ENCODE measurements at regions of chr16 and their contacts with region 1.

Region 1: DNA sequence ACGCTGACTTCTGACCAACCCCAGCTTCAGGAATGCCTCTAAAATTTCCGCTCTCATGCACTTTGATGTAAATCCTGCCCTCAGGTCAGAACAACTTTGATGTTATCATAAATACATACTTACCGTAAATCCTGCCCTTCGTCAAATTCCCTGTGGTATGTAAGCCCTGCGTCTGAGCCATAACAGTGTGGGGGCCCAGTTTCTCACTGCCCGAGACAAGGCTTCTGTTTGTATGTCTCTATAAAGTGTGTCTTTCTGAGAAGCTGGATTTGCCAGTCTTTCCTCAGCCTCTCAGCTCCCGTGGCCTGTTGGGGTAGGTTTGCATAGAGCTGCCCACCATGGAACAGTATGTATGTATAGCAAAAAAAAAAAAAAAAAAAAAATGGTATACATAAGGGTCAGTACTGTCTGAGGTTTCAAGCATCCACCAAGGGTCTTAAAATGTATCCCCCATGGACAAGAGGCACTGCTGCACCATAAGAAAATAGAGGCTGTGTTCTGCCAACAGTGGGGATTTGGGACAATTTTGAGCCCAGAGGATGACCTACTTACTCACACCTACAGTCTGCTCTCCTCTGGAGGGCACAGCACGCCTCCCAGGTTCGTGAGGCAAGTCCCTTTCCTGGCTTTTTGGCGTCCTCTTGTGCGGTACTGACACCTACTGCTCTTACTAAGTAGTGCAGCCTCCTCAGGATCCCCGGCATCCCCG is 17.5 kb downstream of the PRMT7 start:
- DNase-seq: peak; percentile 86
- ATAC-seq: peak; percentile 97
- H3K4me3 Mint-ChIP-seq: no peak overlapping the region
- H3K27ac Mint-ChIP-seq: no peak overlapping the region
- H3K4me1 Mint-ChIP-seq: peaks cover 26% of the 10 kb centered on the region
- H3K27me3 Mint-ChIP-seq: no peaks in the 10 kb centered on the region

Region 2: GRCh38 chr16:68237243-68238028 is 90.9 kb before region 1 on chr16:
- CTCF ChIA-PET with region 1: interaction called, 35 read pairs
- DNase-seq: peak; percentile 94
- ATAC-seq: peak; percentile 84
- H3K4me3 Mint-ChIP-seq: peak overlapping the region; percentile 82
- H3K27ac Mint-ChIP-seq: peak overlapping the region; percentile 90
- H3K4me1 Mint-ChIP-seq: peaks cover 34% of the 10 kb centered on the region
- H3K27me3 Mint-ChIP-seq: peaks cover 8% of the 10 kb centered on the region

Region 3: GRCh38 chr16:68275611-68276191 is 52.6 kb before region 1 on chr16:
- CTCF ChIA-PET with region 1: interaction called, 36 read pairs
- DNase-seq: peak; percentile 65
- ATAC-seq: peak; percentile 75
- H3K4me3 Mint-ChIP-seq: peak overlapping the region; percentile 37
- H3K27ac Mint-ChIP-seq: peak overlapping the region; percentile 90
- H3K4me1 Mint-ChIP-seq: peaks cover 60% of the 10 kb centered on the region
- H3K27me3 Mint-ChIP-seq: no peaks in the 10 kb centered on the region

Region 4: DNA sequence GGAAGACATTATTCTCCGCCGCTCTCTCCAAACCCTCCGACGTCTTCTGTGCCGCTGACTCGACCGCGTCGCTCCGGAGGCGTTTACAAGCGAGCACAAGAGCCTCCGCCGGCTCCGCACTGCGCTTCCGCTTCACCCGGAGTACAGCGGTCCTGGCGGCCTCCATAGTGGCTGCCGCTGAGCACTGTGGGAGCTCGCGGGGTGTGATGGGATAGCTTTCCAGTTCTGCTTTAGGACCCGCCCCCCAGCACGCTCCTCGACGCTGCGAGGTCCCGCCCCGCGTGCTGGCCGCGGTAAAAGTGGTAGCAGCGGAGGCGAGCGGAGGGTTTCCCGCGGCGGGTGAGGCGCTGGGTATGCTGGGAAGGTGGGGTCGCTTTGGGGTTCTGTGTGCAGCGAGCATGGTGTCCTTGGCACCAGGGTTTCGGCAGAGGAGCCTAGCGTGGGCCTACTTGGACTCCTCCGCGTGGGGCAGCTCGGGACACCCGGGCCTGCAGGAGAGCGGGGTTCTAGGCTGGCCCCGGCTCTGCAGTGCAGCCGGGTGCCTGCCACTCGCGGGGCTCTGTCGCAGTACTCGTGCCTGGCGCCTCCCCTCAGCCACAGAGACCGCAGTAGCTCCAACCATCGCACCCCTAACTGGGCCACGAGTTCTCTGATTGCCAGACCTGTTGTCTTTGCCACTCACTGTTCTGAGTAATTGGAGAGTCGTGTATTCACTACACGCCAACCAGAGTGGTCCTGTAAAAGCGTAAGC is 17.4 kb before region 1 on chr16 and contains the starts of genes PRMT7 and SLC7A6OS:
- CTCF ChIA-PET with region 1: interaction called, 18 read pairs
- DNase-seq: peak; percentile 96
- ATAC-seq: peak; percentile 99
- H3K4me3 Mint-ChIP-seq: peak within 1 kb of the TSS; percentile 85
- H3K27ac Mint-ChIP-seq: peak within 1 kb of the TSS; percentile 85
- H3K4me1 Mint-ChIP-seq: peaks cover 52% of the 10 kb centered on the region
- H3K27me3 Mint-ChIP-seq: no peaks in the 10 kb centered on the region
- total RNA-seq, gene PRMT7: 60.9 to 73.9 TPM
- total RNA-seq, gene SLC7A6OS: 29.8 to 30.8 TPM

Region 5: DNA sequence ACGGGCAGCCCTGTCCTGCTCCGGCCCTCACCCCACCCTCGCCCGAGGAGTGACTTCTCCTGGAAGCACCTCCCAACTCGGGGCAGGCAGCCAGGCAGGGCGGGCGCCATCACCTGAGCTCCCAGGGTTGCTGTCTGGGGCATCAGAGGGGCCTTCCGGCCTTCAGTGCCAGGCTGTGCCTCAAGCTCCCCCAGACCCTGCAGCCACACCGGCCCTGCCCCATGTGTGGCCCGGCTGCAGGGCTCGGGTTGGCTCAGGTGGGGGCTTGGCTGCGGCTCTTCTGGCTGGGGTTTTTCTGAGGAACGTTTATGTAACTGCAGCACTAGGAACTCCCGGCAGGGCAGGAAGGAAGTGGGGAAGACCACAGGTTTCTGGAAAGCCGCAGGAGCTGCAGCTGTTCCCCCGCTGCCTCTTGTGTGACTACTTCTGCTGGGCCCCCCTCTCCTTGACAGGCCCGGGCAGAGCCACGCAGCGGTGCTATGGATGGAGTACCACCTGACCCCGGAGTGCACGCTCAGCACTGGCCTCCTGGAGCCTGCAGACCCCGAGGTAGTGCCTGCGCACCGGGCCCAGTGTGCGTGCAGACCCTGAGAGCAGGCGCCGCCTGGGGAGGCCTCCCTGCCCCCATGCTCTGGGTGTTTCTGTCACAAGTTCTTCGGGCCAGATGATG is 28.1 kb after region 1 on chr16:
- CTCF ChIA-PET with region 1: interaction called, 14 read pairs
- DNase-seq: peak; percentile 95
- ATAC-seq: peak; percentile 84
- H3K4me3 Mint-ChIP-seq: peak overlapping the region; percentile 32
- H3K27ac Mint-ChIP-seq: peak overlapping the region; percentile 69
- H3K4me1 Mint-ChIP-seq: peaks cover 37% of the 10 kb centered on the region
- H3K27me3 Mint-ChIP-seq: no peaks in the 10 kb centered on the region

Region 6: DNA sequence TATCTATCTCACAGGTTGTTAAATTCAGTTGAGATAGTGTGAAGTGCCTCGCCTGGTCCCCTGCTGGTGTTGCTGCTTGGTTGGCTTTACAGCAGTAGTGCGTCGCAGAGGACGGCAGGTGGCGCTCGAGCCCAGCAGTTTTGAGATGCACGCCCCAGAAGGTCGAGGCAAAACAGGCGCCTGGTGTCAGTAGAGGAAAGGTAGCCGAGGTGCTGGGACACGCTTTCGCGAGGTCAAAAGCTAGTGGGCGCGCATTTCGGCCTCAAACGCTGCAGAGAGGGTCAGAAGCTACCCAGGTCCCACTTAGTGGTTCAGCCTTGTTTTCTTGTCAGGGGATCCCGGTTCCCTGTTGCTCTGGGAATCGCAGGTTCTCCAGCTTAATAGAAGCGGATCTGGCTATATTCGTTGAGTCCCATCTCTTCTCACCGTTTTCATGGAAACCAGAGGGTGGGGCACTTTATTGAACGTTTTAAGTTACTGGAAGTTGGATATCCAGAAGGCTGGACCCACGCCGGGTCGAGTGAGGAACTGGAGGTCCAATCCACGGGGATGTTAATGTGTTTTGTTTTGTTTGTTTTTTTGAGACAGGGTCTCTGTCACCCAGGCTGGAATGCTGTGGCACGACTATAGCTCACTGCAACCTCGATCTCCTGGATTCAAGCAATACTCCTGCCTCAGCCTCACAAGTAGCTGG is 200.5 kb after region 1 on chr16:
- CTCF ChIA-PET with region 1: no interaction called
- DNase-seq: peak; percentile 91
- ATAC-seq: peak; percentile 82
- H3K4me3 Mint-ChIP-seq: peak overlapping the region; percentile 77
- H3K27ac Mint-ChIP-seq: no peak overlapping the region
- H3K4me1 Mint-ChIP-seq: peaks cover 22% of the 10 kb centered on the region
- H3K27me3 Mint-ChIP-seq: no peaks in the 10 kb centered on the region